Mammary epithelial cell (primary cell): ENCODE measurements at regions of chr14 and their contacts with region 1.

Region 1: GRCh38 chr14:94598814-94599652 is 13.2 kb upstream of the SERPINA3 start:
- DNase-seq: peak; percentile 99
- H3K4me3 ChIP-seq: peak overlapping the region in 1 of 3 experiments; percentile 8
- H3K27ac ChIP-seq: peak overlapping the region; percentile 93
- H3K4me1 ChIP-seq: peaks cover 43% of the 10 kb centered on the region
- H3K27me3 ChIP-seq: no peaks in the 10 kb centered on the region
- CTCF ChIP-seq: peak; percentile 31 to 37

Region 2: GRCh38 chr14:94612174-94612573 is 13.1 kb after region 1 on chr14 and contains the start of gene SERPINA3:
- CTCF ChIA-PET with region 1: no interaction called
- dilution Hi-C with region 1: no loop called
- in situ Hi-C with region 1: no loop called
- intact Hi-C with region 1: loop called (anchors 1 kb)
- DNase-seq: peak; percentile 26
- H3K4me3 ChIP-seq: no peak within 1 kb of the TSS
- H3K27ac ChIP-seq: peak within 1 kb of the TSS; percentile 24
- H3K4me1 ChIP-seq: peaks cover 28% of the 10 kb centered on the region
- H3K27me3 ChIP-seq: no peaks in the 10 kb centered on the region
- CTCF ChIP-seq: no peak
- total RNA-seq, gene SERPINA3: 5.2 to 998 TPM

Region 3: GRCh38 chr14:94689218-94689984 is 90.4 kb after region 1 on chr14:
- CTCF ChIA-PET with region 1: no interaction called
- dilution Hi-C with region 1: no loop called
- in situ Hi-C with region 1: no loop called
- intact Hi-C with region 1: no loop called
- DNase-seq: peak; percentile 23
- H3K4me3 ChIP-seq: no peak overlapping the region
- H3K27ac ChIP-seq: no peak overlapping the region
- H3K4me1 ChIP-seq: peaks cover 4% of the 10 kb centered on the region
- H3K27me3 ChIP-seq: no peaks in the 10 kb centered on the region
- CTCF ChIP-seq: peak; percentile 80 to 99